Psoas muscle (tissue), 8 donors: ENCODE measurements at regions of chr17 and their contacts with region 1.

Region 1: GRCh38 chr17:30454635-30455034 is 22.6 kb upstream of the GOSR1 start:
- DNase-seq: no peak
- ATAC-seq: peak in 2 of 4 donors; percentile 35 to 56
- H3K4me3 ChIP-seq: no peak overlapping the region
- H3K27ac ChIP-seq: no peak overlapping the region
- H3K4me1 ChIP-seq: peaks cover 3% of the 10 kb centered on the region
- H3K27me3 ChIP-seq: no peaks in the 10 kb centered on the region
- CTCF ChIP-seq: no peak

Region 2: DNA sequence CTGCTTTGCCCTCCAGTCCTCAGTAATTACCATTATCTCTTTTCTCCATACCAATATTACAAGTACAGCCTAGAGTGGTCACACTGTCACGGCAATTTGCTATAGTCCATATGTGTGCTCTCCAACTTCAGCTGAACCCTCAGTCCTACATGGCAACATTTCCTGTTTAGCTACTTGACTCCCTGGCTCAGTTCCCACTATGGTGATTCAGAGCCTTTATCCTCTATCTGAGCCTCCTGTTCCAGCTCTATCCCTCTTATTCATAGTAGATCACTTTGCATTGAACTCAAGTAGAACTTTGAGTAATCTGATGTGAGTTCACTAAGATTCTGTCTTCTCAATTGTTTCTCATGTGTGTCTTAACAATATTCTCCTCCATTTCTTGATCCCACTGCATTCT is 21.1 kb before region 1 on chr17:
- intact Hi-C with region 1: loop called in 1 of 2 experiments (anchors 2 kb)
- DNase-seq: no peak
- ATAC-seq: peak; percentile 72 to 97 (median 90)
- H3K4me3 ChIP-seq: no peak overlapping the region
- H3K27ac ChIP-seq: peak overlapping the region; percentile 14
- H3K4me1 ChIP-seq: peaks cover 4% of the 10 kb centered on the region
- H3K27me3 ChIP-seq: no peaks in the 10 kb centered on the region
- CTCF ChIP-seq: no peak